ENCODE measurements at regions of chr9 and their contacts with region 1.

Region 1: DNA sequence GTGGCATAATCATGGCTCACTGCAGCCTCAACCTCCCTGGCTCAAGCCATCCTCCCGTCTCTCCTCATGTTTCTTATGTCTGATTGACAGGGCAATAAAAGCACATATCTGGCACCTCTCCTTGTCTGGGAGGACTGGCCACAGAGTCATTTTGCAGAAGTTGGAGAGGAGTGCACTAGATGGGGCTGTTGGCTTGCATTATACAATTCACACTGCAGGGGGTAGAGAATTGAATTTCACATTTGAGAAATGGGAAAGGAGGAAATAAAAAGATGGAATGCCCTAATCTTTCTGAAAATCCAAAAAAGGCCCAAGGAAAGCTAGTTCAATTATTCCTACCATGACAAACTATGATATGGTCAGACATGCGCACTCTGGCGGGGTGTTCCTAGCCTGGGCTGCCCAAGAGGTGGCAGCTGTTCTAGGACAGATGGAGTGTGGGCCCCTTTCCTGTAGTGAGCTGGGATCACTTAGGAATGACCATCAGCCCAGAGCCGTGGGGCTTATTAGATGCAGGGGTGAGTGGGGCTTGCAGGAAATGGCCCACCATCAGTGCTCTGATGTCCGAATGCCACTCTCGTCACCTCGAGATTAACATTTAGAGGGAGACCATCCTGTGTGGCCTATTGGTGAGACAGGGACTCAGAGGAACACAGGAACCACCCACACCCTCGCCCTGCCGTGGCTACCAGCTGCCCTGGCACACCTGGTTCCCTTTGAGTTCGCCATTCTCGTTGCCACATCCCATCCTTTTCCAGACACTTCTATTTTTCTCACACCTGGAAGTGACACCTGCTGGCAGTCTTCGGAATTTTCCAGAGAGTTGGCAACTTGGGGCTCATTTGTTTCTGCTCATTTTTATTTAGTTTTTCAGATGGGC is 21.8 kb upstream of the ANKRD18A start:
- DNase-seq: peak; percentile 49
- H3K4me3 ChIP-seq: no peak overlapping the region
- H3K27ac ChIP-seq: no peak overlapping the region
- H3K4me1 ChIP-seq: no peaks in the 10 kb centered on the region
- H3K27me3 ChIP-seq: no peaks in the 10 kb centered on the region
- CTCF ChIP-seq: peak; percentile 47

Region 2: DNA sequence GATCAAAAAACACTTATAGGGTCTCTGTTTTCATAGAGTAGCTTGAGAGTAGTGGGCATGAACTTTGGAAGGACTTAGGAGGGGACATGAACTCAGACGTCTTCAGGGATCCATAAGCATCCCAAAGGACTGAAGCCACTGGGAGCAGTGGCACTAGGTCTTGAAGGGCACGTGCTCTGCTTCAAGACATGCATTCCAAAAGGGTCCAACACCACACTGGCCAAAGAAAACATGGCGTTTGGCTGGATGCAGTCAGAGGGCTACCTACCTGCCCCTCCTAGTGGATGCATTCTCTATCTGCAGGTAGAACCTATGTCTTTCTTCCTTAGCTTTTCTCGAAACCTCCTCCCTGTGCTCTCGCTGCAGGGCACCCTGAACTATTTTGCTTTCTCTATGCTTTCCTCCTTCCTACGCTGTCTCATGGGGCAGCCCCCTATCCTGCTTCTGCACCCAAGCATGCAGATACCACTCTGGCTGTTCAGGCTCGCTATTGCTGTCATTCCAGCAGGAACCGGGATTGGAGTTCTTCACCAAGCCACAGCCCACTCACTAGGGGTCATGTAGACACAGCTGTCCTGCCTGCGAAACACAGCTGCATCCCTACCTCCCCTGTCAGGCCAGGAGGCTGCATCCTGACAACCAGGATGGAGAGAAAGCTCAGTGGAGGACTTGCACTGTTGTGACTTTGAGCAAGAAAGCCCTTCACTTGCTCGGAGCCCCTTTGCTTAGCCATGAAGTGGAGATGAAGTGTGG is 65.8 kb after region 1 on chr9:
- intact Hi-C with region 1: loop called (anchors 10 kb)
- DNase-seq: no peak
- H3K4me3 ChIP-seq: no peak overlapping the region
- H3K27ac ChIP-seq: no peak overlapping the region
- H3K4me1 ChIP-seq: no peaks in the 10 kb centered on the region
- H3K27me3 ChIP-seq: no peaks in the 10 kb centered on the region
- CTCF ChIP-seq: no peak